HepG2 (cell line): ENCODE measurements at regions of chr12 and their contacts with region 1.

Region 1: GRCh38 chr12:65510584-65511050 is 232.1 kb downstream of the MSRB3 start:
- DNase-seq: peak; percentile 88
- ATAC-seq: peak; percentile 96
- H3K4me3 ChIP-seq: peak overlapping the region in 1 of 3 experiments; percentile 30; a peak in 1 of 6 replicates
- H3K27ac ChIP-seq: no peak overlapping the region
- H3K4me1 ChIP-seq: peaks cover 17% of the 10 kb centered on the region
- H3K27me3 ChIP-seq: peaks cover 2 to 11% of the 10 kb centered on the region in 2 experiments; a peak in 1 of 5 replicates
- CTCF ChIP-seq: no peak
- EP300 ChIP-seq: no peak
- POLR2A ChIP-seq: no peak
- RAD21 ChIP-seq: no peak

Region 2: GRCh38 chr12:65327207-65328076 is 183.2 kb before region 1 on chr12:
- CTCF ChIA-PET with region 1: no interaction called
- POLR2A ChIA-PET with region 1: no interaction called
- in situ Hi-C with region 1: no loop called
- intact Hi-C with region 1: loop called (anchors 2 kb)
- DNase-seq: peak; percentile 97
- ATAC-seq: peak; percentile 100
- H3K4me3 ChIP-seq: peak overlapping the region; percentile 29 to 54 (median 36); a peak in 5 of 6 replicates
- H3K27ac ChIP-seq: peak overlapping the region; percentile 87
- H3K4me1 ChIP-seq: peaks cover 40% of the 10 kb centered on the region
- H3K27me3 ChIP-seq: no peaks in the 10 kb centered on the region
- CTCF ChIP-seq: no peak
- EP300 ChIP-seq: peak; percentile 21 to 79; a peak in 3 of 4 replicates
- POLR2A ChIP-seq: 0 out of 4 replicates have a peak, but pooled peaks of 1 of the 2 experiments have one; percentile 40
- RAD21 ChIP-seq: no peak